Naive thymus-derived CD4-positive, alpha-beta T cell (primary cell): ENCODE measurements at regions of chr16 and their contacts with region 1.

Region 1: GRCh38 chr16:73956587-73957494 is 339.8 kb upstream of the PSMD7 start:
- DNase-seq: peak in 6 of 9 donors; percentile 1 to 25 (median 10)
- ATAC-seq: peak; percentile 44
- H3K4me3 ChIP-seq: no peak overlapping the region
- H3K4me3 Mint-ChIP-seq: no peak overlapping the region
- H3K27ac ChIP-seq: no peak overlapping the region
- H3K27ac Mint-ChIP-seq: no peak overlapping the region
- H3K4me1 ChIP-seq: no peaks in the 10 kb centered on the region
- H3K4me1 Mint-ChIP-seq: no peaks in the 10 kb centered on the region
- H3K27me3 ChIP-seq: no peaks in the 10 kb centered on the region
- H3K27me3 Mint-ChIP-seq: peaks cover 0 to 20% (median 3%) of the 10 kb centered on the region in 5 donors

Region 2: GRCh38 chr16:72400257-72400882 is 1556.5 kb before region 1 on chr16:
- CTCF ChIA-PET with region 1: no interaction called
- POLR2A ChIA-PET with region 1: no interaction called
- intact Hi-C with region 1: loop called in 1 of 2 experiments (anchors 10 kb)
- DNase-seq: peak in 2 of 9 donors; percentile 2
- ATAC-seq: peak; percentile 58
- H3K4me3 ChIP-seq: no peak overlapping the region
- H3K4me3 Mint-ChIP-seq: no peak overlapping the region
- H3K27ac ChIP-seq: no peak overlapping the region
- H3K27ac Mint-ChIP-seq: no peak overlapping the region
- H3K4me1 ChIP-seq: no peaks in the 10 kb centered on the region
- H3K4me1 Mint-ChIP-seq: no peaks in the 10 kb centered on the region
- H3K27me3 ChIP-seq: no peaks in the 10 kb centered on the region
- H3K27me3 Mint-ChIP-seq: peaks cover 0 to 4% (median 0%) of the 10 kb centered on the region in 5 donors